Pancreas (tissue), 10 donors: ENCODE measurements at regions of chr1 and their contacts with region 1.

Region 1: GRCh38 chr1:152440635-152441471 is 26.8 kb upstream of the CRNN start:
- DNase-seq: peak; percentile 58 to 83 (median 71)
- ATAC-seq: peak; percentile 92 to 99 (median 96)
- H3K4me3 ChIP-seq: no peak overlapping the region
- H3K27ac ChIP-seq: no peak overlapping the region
- H3K4me1 ChIP-seq: no peaks in the 10 kb centered on the region
- H3K27me3 ChIP-seq: no peaks in the 10 kb centered on the region
- CTCF ChIP-seq: peak; percentile 75 to 85 (median 78)

Region 2: DNA sequence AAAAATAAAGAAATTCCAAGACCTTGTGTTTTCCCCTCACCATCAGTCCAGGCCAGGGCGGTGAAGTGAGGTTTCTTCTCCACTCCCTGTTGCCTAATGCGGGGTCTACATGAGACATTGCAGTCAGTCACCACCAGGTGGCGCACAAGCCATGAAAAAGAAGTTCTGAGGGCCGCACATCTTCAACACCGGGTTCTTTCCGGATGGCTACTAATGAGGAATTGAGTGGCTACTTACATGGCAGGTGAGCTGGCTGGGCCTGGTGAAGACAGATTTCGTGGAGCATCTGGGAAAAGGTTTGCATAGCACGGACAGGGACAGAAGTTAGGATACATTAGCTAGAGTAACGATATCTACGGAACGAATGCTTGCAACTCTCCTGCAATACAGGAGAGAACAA is 388.2 kb before region 1 on chr1:
- intact Hi-C with region 1: loop called in 1 of 3 experiments (anchors 10 kb)
- DNase-seq: peak; percentile 67 to 95 (median 84)
- ATAC-seq: peak in 3 of 4 donors; percentile 43 to 63 (median 54)
- H3K4me3 ChIP-seq: no peak overlapping the region
- H3K27ac ChIP-seq: no peak overlapping the region
- H3K4me1 ChIP-seq: peaks cover 4 to 13% (median 11%) of the 10 kb centered on the region in 3 donors
- H3K27me3 ChIP-seq: no peaks in the 10 kb centered on the region
- CTCF ChIP-seq: peak; percentile 77 to 92 (median 86)

Region 3: DNA sequence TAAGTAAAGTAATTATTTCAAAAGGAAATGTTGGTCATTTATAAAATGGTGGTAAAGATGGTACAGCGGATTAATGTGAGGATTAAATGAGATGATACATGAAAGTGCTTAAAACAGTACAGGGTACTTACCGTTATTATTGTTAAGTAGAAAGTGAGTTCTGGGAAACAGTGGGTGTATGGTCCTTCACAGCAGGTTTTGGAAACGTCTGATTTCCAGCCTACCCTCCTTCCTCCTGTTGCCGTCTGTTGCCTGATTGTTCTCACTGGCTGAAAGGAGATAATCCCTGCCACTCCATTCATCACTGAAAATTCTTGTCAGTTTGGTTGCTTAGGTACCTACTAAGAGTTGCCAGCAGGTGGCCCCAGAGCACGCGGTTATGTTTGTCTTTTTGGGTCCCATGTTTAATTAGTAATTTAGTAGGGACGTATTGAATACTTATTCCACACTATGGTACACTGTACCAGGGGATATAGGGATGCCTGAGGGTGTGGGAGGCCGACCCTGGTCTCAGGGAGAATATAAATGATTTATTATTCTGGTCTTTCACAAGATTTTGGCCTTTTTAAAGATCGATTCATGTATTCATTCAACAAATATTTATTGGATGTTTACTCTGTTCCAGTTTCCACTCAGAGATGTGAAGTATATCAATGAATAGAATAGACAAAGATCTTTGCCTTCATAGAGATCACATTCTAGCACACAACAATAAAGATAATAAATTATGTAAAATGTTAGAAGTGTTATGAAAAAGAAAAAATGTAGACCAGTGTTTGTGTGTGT is 251.0 kb before region 1 on chr1:
- intact Hi-C with region 1: loop called in 1 of 3 experiments (anchors 5 kb)
- DNase-seq: peak in 5 of 6 donors; percentile 16 to 68 (median 44)
- ATAC-seq: peak; percentile 68 to 83 (median 75)
- H3K4me3 ChIP-seq: peak overlapping the region in 3 of 4 donors; percentile 30 to 62 (median 50)
- H3K27ac ChIP-seq: no peak overlapping the region
- H3K4me1 ChIP-seq: no peaks in the 10 kb centered on the region
- H3K27me3 ChIP-seq: no peaks in the 10 kb centered on the region
- CTCF ChIP-seq: peak; percentile 34 to 57 (median 45)